Activated CD8-positive, alpha-beta T cell treated with anti-CD3 and anti-CD28 coated beads, Interleukin-2, amount 10 ng/mL, durations not matched to agents 7 days and 5 days (primary cell): ENCODE measurements at regions of chr2 and their contacts with region 1.

Region 1: GRCh38 chr2:68206793-68207192 is 45.5 kb downstream of the PPP3R1 start:
- DNase-seq: no peak
- ATAC-seq: no peak
- H3K4me3 Mint-ChIP-seq: no peak overlapping the region
- H3K27ac Mint-ChIP-seq: peak overlapping the region; percentile 7
- H3K4me1 Mint-ChIP-seq: peaks cover 39% of the 10 kb centered on the region
- H3K27me3 Mint-ChIP-seq: no peaks in the 10 kb centered on the region

Region 2: GRCh38 chr2:68057661-68058396 is 149.0 kb before region 1 on chr2:
- CTCF ChIA-PET with region 1: no interaction called
- POLR2A ChIA-PET with region 1: no interaction called
- DNase-seq: no peak
- ATAC-seq: no peak
- H3K4me3 Mint-ChIP-seq: no peak overlapping the region
- H3K27ac Mint-ChIP-seq: no peak overlapping the region
- H3K4me1 Mint-ChIP-seq: peaks cover 15% of the 10 kb centered on the region
- H3K27me3 Mint-ChIP-seq: no peaks in the 10 kb centered on the region

Region 3: DNA sequence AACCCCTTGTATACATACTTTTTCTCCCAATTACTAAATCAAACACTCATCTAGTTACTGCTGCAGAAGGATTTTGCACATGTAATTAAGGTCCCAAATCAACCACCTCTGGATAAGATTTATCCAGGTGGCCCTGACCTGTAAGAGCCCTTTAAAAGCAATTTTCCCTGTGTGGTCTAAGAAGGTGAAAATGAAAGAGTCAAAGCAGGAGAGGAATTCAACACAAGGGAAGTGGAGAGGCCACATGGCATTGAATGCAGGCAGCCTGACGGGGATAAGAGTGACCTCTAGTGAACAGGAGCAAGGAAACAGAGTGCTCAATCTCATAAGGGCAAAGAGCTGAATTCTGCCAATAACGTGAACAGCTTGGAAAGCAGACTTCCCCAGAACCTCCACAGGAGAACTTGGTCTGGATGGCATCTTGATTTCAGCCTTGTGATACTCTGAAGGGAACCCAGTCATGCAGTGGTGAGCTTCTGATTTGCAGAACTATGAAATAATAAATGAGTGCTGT is 18.4 kb after region 1 on chr2:
- CTCF ChIA-PET with region 1: interaction called, 14 read pairs
- POLR2A ChIA-PET with region 1: no interaction called
- DNase-seq: peak; percentile 28
- ATAC-seq: no peak
- H3K4me3 Mint-ChIP-seq: no peak overlapping the region
- H3K27ac Mint-ChIP-seq: no peak overlapping the region
- H3K4me1 Mint-ChIP-seq: peaks cover 36% of the 10 kb centered on the region
- H3K27me3 Mint-ChIP-seq: no peaks in the 10 kb centered on the region